ENCODE measurements at regions of chr1 and their contacts with region 1.

Region 1: DNA sequence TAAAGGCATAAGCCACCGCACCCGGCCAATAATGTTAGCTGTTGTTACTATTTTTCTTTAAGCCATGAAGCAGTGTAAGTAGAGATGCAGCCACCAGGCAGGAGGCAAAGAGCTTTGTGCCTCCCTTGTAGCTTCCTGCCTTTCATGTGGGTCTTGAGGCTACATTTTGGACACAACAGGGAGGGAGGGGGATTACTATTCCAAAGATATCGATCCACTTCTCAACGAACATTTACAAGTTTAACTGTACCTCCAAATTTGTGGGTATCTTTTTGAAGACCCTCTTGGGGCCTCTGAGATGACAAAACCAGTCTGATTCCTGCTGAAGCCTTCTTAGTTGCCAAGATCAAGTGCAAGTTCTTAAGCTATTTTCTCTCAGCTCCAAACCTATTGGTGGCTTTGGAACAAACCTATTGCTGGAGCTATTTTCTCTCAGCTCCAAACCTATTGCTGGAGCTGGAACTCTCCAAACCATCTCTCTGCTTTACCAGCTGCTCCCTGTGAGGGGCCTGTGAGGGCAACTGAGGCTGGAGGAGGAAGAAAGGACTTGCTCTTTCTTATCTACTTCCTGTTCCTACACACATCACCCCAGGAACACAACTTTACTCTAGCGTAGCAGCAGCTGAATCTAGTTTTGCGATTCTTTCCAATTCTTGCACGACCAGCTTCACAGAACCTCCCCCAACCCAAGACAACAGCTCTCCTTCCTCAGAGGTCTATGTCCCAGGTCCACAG is 16.1 kb upstream of the RCAN3 start:
- DNase-seq: peak in 7 of 9 donors; percentile 69 to 82 (median 77)
- ATAC-seq: peak; percentile 69
- H3K4me3 ChIP-seq: peak overlapping the region; percentile 11
- H3K4me3 Mint-ChIP-seq: peak overlapping the region; percentile 70 to 86 (median 78)
- H3K27ac ChIP-seq: peak overlapping the region; percentile 76
- H3K27ac Mint-ChIP-seq: peak overlapping the region; percentile 93 to 99 (median 97)
- H3K4me1 ChIP-seq: peaks cover 52 to 81% of the 10 kb centered on the region in 2 donors
- H3K4me1 Mint-ChIP-seq: peaks cover 47 to 90% (median 76%) of the 10 kb centered on the region in 7 donors
- H3K27me3 ChIP-seq: no peaks in the 10 kb centered on the region
- H3K27me3 Mint-ChIP-seq: no peaks in the 10 kb centered on the region

Region 2: GRCh38 chr1:24463776-24464735 is 22.4 kb before region 1 on chr1:
- CTCF ChIA-PET with region 1: interaction called, 5 read pairs
- POLR2A ChIA-PET with region 1: interaction called, 19 read pairs
- intact Hi-C with region 1: loop called in 1 of 2 experiments (anchors 1 kb)
- DNase-seq: peak in 6 of 9 donors; percentile 12 to 37 (median 31)
- ATAC-seq: no peak
- H3K4me3 ChIP-seq: no peak overlapping the region
- H3K4me3 Mint-ChIP-seq: peak overlapping the region in 8 of 10 donors; percentile 63 to 75 (median 68)
- H3K27ac ChIP-seq: peak overlapping the region; percentile 45
- H3K27ac Mint-ChIP-seq: peak overlapping the region; percentile 58 to 95 (median 86)
- H3K4me1 ChIP-seq: peaks cover 0 to 15% of the 10 kb centered on the region in 2 donors
- H3K4me1 Mint-ChIP-seq: peaks cover 21 to 65% (median 50%) of the 10 kb centered on the region in 7 donors
- H3K27me3 ChIP-seq: no peaks in the 10 kb centered on the region
- H3K27me3 Mint-ChIP-seq: no peaks in the 10 kb centered on the region

Region 3: GRCh38 chr1:24472527-24473251 is 13.8 kb before region 1 on chr1:
- CTCF ChIA-PET with region 1: interaction called, 4 read pairs
- POLR2A ChIA-PET with region 1: interaction called, 929 read pairs
- intact Hi-C with region 1: no loop called
- DNase-seq: no peak
- ATAC-seq: no peak
- H3K4me3 ChIP-seq: no peak overlapping the region
- H3K4me3 Mint-ChIP-seq: no peak overlapping the region
- H3K27ac ChIP-seq: no peak overlapping the region
- H3K27ac Mint-ChIP-seq: peak overlapping the region in 7 of 9 donors; percentile 44 to 82 (median 68)
- H3K4me1 ChIP-seq: no peaks in the 10 kb centered on the region
- H3K4me1 Mint-ChIP-seq: peaks cover 7 to 68% (median 49%) of the 10 kb centered on the region in 7 donors
- H3K27me3 ChIP-seq: no peaks in the 10 kb centered on the region
- H3K27me3 Mint-ChIP-seq: no peaks in the 10 kb centered on the region